Activated CD4-positive, alpha-beta memory T cell treated with anti-CD3 and anti-CD28 coated beads for 36 hours (primary cell): ENCODE measurements at regions of chrX and their contacts with region 1.

Region 1: DNA sequence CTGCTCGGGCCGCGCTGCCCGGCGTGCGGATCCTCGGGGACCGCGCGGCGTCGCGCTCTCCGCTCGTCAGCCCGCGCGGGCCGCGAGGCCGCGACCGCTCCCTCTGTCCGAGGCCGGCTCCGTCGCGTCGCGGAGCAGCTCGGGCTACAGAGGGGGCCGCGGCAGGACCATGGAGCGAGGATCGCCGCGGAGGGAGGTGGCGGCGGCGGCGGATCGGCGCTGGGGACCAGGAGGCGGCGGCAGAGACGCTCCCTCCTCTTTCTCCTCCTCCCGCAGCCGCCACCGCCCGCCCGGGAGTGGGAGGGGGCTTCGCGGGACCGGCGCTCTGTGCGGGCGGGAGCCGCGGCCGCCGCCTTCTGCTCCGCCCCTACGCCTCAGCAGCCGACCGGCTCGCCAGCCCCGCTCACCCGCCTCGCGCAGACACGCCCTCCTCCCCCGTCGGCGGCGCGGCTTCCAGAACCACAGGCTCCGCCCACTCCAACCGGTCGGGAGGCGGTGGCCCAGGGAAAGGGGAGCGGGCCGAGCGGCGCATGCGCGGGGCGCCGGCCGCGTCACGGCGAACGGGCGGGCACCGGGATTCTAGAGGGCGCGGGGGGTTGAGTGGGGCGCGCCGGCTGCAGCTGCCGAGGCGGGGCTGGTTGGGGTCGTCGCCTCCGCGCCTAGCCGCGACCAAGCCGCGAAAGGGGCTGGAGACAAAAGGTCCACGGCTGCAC is at the start of gene CASK:
- DNase-seq: peak; percentile 93
- H3K4me3 Mint-ChIP-seq: peak within 1 kb of the TSS; percentile 92
- H3K27ac Mint-ChIP-seq: peak within 1 kb of the TSS; percentile 89
- H3K4me1 Mint-ChIP-seq: peaks cover 26% of the 10 kb centered on the region
- H3K27me3 Mint-ChIP-seq: no peaks in the 10 kb centered on the region
- total RNA-seq, gene CASK: 27.0 to 27.8 TPM

Region 2: GRCh38 chrX:41561045-41561444 is 362.4 kb before region 1 on chrX:
- CTCF ChIA-PET with region 1: no interaction called
- POLR2A ChIA-PET with region 1: no interaction called
- intact Hi-C with region 1: loop called (anchors 10 kb)
- DNase-seq: peak; percentile 52
- H3K4me3 Mint-ChIP-seq: no peak overlapping the region
- H3K27ac Mint-ChIP-seq: peak overlapping the region; percentile 62
- H3K4me1 Mint-ChIP-seq: peaks cover 44% of the 10 kb centered on the region
- H3K27me3 Mint-ChIP-seq: no peaks in the 10 kb centered on the region

Region 3: DNA sequence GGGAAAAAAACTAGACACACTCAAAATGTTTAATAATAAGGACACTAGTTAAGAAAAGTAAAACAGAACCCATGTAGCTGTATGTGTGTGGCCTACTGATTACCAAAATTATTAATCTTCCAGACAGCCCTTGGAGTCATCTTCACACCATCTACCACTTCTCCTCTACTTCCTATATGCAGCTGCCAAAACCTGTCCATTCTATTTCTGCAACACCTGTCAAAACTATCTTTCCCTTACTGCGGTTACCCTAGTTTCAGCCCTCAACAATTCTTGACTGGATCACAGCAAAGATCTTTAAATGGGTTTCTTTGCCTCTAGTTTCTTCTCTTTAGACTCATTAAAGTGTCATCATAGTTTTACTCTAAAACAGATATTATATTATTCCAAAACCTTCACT is 126.8 kb before region 1 on chrX:
- CTCF ChIA-PET with region 1: no interaction called
- POLR2A ChIA-PET with region 1: no interaction called
- intact Hi-C with region 1: loop called (anchors 2 kb)
- DNase-seq: no peak
- H3K4me3 Mint-ChIP-seq: no peak overlapping the region
- H3K27ac Mint-ChIP-seq: peak overlapping the region; percentile 31
- H3K4me1 Mint-ChIP-seq: peaks cover 39% of the 10 kb centered on the region
- H3K27me3 Mint-ChIP-seq: no peaks in the 10 kb centered on the region

Region 4: GRCh38 chrX:41875142-41875541 is 48.3 kb before region 1 on chrX:
- CTCF ChIA-PET with region 1: no interaction called
- POLR2A ChIA-PET with region 1: no interaction called
- intact Hi-C with region 1: no loop called
- DNase-seq: no peak
- H3K4me3 Mint-ChIP-seq: no peak overlapping the region
- H3K27ac Mint-ChIP-seq: no peak overlapping the region
- H3K4me1 Mint-ChIP-seq: peaks cover 34% of the 10 kb centered on the region
- H3K27me3 Mint-ChIP-seq: no peaks in the 10 kb centered on the region

Region 5: GRCh38 chrX:41906515-41907165 is 16.8 kb before region 1 on chrX:
- CTCF ChIA-PET with region 1: interaction called, 7 read pairs
- POLR2A ChIA-PET with region 1: interaction called, 8 read pairs
- intact Hi-C with region 1: loop called (anchors 1 kb)
- DNase-seq: peak; percentile 62
- H3K4me3 Mint-ChIP-seq: no peak overlapping the region
- H3K27ac Mint-ChIP-seq: peak overlapping the region; percentile 51
- H3K4me1 Mint-ChIP-seq: peaks cover 69% of the 10 kb centered on the region
- H3K27me3 Mint-ChIP-seq: no peaks in the 10 kb centered on the region

Region 6: GRCh38 chrX:42020225-42020624 is 96.8 kb after region 1 on chrX:
- CTCF ChIA-PET with region 1: no interaction called
- POLR2A ChIA-PET with region 1: no interaction called
- intact Hi-C with region 1: loop called (anchors 5 kb)
- DNase-seq: no peak
- H3K4me3 Mint-ChIP-seq: no peak overlapping the region
- H3K27ac Mint-ChIP-seq: peak overlapping the region; percentile 45
- H3K4me1 Mint-ChIP-seq: peaks cover 20% of the 10 kb centered on the region
- H3K27me3 Mint-ChIP-seq: no peaks in the 10 kb centered on the region

Region 7: GRCh38 chrX:42107495-42108488 is 184.4 kb after region 1 on chrX:
- CTCF ChIA-PET with region 1: no interaction called
- POLR2A ChIA-PET with region 1: no interaction called
- intact Hi-C with region 1: loop called (anchors 5 kb)
- DNase-seq: peak; percentile 61
- H3K4me3 Mint-ChIP-seq: no peak overlapping the region
- H3K27ac Mint-ChIP-seq: peak overlapping the region; percentile 38
- H3K4me1 Mint-ChIP-seq: peaks cover 28% of the 10 kb centered on the region
- H3K27me3 Mint-ChIP-seq: no peaks in the 10 kb centered on the region